ENCODE measurements at regions of chr10 and their contacts with region 1.

Region 1: DNA sequence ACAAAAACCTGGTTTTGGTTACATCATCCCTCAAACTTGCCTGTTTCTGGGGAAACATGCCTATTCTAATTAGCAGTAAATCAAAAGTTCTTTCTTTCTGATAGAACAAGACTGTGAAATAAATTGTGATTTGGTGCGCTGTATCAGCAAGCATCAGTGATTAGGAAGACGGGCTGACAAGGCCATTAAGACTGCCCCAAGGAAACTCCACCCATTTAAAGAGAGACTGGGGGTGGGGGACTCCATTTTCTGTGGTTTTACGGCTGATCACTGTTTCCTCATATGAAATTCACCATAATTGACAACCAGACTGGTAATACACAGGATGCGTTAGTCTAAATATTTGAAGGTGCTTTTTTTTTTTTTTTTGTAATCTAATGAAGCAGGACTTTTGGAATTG is 68.7 kb downstream of the MBL2 start:
- DNase-seq: peak; percentile 93
- ATAC-seq: peak; percentile 79
- H3K4me3 ChIP-seq: peak overlapping the region; percentile 62
- H3K27ac ChIP-seq: peak overlapping the region; percentile 83
- H3K4me1 ChIP-seq: peaks cover 32% of the 10 kb centered on the region
- H3K27me3 ChIP-seq: no peaks in the 10 kb centered on the region
- CTCF ChIP-seq: no peak

Region 2: GRCh38 chr10:52451817-52452216 is 252.1 kb before region 1 on chr10:
- CTCF ChIA-PET with region 1: no interaction called
- POLR2A ChIA-PET with region 1: no interaction called
- intact Hi-C with region 1: loop called (anchors 5 kb)
- DNase-seq: peak; percentile 100
- ATAC-seq: peak; percentile 65
- H3K4me3 ChIP-seq: peak overlapping the region; percentile 62
- H3K27ac ChIP-seq: peak overlapping the region; percentile 80
- H3K4me1 ChIP-seq: peaks cover 86% of the 10 kb centered on the region
- H3K27me3 ChIP-seq: no peaks in the 10 kb centered on the region
- CTCF ChIP-seq: no peak

Region 3: DNA sequence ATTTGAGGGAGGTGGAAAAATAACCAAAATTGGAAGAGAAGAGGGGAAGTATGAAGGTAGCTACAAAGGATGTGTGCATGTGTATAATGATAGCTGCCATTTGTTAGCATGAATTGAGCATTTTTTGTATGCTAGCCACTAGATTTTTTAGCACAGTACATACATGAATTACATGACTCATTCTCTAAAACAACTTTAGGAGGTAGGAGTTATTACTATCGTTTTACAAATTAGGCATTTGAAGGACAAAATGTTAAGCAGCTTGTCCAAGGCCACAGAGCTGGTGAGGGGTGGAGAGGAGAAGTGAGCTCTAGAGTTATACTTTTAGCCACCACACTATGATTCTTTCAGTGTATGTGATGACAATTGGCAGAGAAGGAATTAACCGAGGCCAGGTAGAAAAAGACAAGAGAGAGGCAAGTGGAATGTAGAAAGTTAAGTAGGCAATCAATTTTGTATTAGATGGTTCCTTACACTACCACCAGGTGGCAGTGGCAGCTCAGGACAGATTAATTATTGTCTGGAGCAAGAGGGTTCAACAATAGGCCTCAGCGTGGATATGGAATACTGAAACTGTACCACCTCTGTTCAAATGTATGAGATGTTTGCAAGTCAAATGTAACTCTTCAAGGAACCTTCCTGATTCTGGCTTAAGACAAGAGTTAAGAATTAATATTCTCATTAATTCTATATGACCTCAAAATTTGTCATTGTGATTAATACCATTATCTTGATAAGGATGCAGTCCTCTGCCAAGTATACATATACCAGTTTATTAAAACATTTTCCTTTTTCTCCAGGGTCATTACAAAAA is 59.3 kb before region 1 on chr10:
- CTCF ChIA-PET with region 1: no interaction called
- POLR2A ChIA-PET with region 1: no interaction called
- intact Hi-C with region 1: loop called (anchors 1 kb)
- DNase-seq: peak; percentile 97
- ATAC-seq: peak; percentile 83
- H3K4me3 ChIP-seq: peak overlapping the region; percentile 18; the same call in 1 of the 2 replicates
- H3K27ac ChIP-seq: no peak overlapping the region
- H3K4me1 ChIP-seq: peaks cover 15% of the 10 kb centered on the region
- H3K27me3 ChIP-seq: no peaks in the 10 kb centered on the region
- CTCF ChIP-seq: peak; percentile 100

Region 4: GRCh38 chr10:52652431-52653262 is 51.3 kb before region 1 on chr10:
- CTCF ChIA-PET with region 1: no interaction called
- POLR2A ChIA-PET with region 1: no interaction called
- intact Hi-C with region 1: loop called (anchors 2 kb)
- DNase-seq: peak; percentile 53
- ATAC-seq: peak; percentile 66
- H3K4me3 ChIP-seq: no peak overlapping the region
- H3K27ac ChIP-seq: no peak overlapping the region
- H3K4me1 ChIP-seq: peaks cover 13% of the 10 kb centered on the region
- H3K27me3 ChIP-seq: no peaks in the 10 kb centered on the region
- CTCF ChIP-seq: no peak

Region 5: DNA sequence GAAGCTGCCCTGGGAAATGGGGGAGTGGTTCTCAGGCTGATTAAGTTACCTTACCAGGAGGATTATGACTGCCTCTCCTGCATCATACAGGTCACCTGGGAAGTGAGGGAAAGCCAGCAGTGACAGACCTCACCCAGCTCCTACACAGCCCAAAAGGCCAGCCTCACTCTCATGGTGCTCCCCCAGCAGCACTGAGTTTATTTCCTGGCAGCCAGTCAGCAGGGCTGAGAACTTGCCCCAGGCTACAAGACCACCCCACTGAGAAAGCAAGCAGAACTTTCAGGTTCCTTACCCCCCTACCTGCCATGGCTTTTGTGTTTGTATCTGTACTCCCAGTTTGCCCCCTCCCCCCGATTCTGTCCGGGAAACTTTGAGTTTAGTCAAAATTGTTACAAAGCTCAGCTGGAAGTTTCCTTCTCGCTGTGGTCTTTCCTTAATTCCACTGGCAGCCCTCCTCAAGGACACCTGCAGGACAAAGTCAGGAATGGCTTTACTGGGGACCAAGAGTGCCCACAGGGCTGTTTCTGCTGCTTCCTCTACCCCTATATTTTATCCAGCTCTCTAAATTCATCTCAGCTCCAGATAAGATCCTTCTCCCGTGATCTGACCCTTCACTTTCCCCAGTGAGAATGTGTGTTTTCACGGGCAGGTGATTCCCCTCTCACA is 718.5 kb after region 1 on chr10:
- CTCF ChIA-PET with region 1: no interaction called
- POLR2A ChIA-PET with region 1: no interaction called
- intact Hi-C with region 1: no loop called
- DNase-seq: no peak
- ATAC-seq: no peak; the same call in 1 of the 2 replicates
- H3K4me3 ChIP-seq: no peak overlapping the region
- H3K27ac ChIP-seq: no peak overlapping the region
- H3K4me1 ChIP-seq: no peaks in the 10 kb centered on the region
- H3K27me3 ChIP-seq: no peaks in the 10 kb centered on the region
- CTCF ChIP-seq: no peak; the same call in 1 of the 2 replicates

Measured in PC-3 (cell line).